Activated T-helper 2 cell treated with anti-CD3 and anti-CD28 coated beads, Interferon-gamma antibody, Interleukin-2, Interleukin-4, amounts not matched to agents 10 μg/mL and 5 μg/mL and 100 μg/mL, durations not matched to agents 14 hours and 24 hours and 36 hours (primary cell): ENCODE measurements at regions of chr18 and their contacts with region 1.

Region 1: GRCh38 chr18:48194591-48195181 is 214.5 kb downstream of the ZBTB7C start:
- DNase-seq: no peak
- H3K4me3 Mint-ChIP-seq: no peak overlapping the region
- H3K27ac Mint-ChIP-seq: no peak overlapping the region
- H3K4me1 Mint-ChIP-seq: peaks cover 9% of the 10 kb centered on the region
- H3K27me3 Mint-ChIP-seq: peaks cover 30% of the 10 kb centered on the region

Region 2: GRCh38 chr18:47582093-47582492 is 612.6 kb before region 1 on chr18:
- intact Hi-C with region 1: no loop called
- DNase-seq: no peak
- H3K4me3 Mint-ChIP-seq: no peak overlapping the region
- H3K27ac Mint-ChIP-seq: no peak overlapping the region
- H3K4me1 Mint-ChIP-seq: no peaks in the 10 kb centered on the region
- H3K27me3 Mint-ChIP-seq: peaks cover 4% of the 10 kb centered on the region

Region 3: GRCh38 chr18:48129621-48130082 is 65.0 kb before region 1 on chr18:
- intact Hi-C with region 1: loop called (anchors 5 kb)
- DNase-seq: no peak
- H3K4me3 Mint-ChIP-seq: no peak overlapping the region
- H3K27ac Mint-ChIP-seq: no peak overlapping the region
- H3K4me1 Mint-ChIP-seq: peaks cover 25% of the 10 kb centered on the region
- H3K27me3 Mint-ChIP-seq: peaks cover 76% of the 10 kb centered on the region